Lower leg skin (tissue), 4 donors: ENCODE measurements at regions of chr2 and their contacts with region 1.

Region 1: DNA sequence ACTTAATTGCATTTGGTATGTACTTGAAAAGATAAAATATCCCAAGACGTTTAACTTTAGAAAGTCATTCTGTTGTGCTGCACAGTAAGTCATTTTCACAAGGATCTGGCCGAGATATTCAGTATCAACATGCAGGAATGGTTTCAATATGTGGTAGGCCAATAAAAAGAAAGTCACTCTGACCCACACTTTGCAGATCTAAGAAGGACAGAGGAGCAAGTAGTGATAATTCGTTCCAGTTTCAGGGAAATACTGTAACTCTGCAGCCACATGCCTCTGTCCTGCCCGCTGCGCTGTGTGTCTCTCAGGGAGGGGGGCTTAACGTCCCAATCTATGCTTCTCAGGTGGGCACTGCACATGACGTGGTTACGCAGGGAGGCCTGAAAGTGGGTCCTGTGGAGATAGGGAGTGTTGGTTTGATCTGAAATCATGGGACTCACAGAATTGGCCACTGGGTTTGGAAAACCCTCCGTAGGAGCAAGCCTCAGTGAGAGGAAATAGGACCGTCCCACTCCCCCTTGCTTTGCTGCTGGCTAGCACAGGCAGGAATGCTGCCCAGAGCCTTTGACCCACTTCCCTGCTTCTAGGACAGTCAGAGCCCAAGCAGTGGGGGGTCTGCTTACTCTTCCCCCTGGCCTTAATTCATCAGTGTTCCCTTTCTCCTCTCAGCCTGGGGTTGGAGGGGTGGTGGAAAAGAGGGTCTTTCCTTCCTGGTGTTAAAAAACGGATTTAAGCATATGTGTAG is 314.7 kb upstream of the SPRED2 start:
- DNase-seq: no peak
- H3K4me3 ChIP-seq: no peak overlapping the region
- CTCF ChIP-seq: no peak
- POLR2A ChIP-seq: no peak

Region 2: GRCh38 chr2:65999796-66000195 is 252.7 kb after region 1 on chr2:
- intact Hi-C with region 1: no loop called
- DNase-seq: no peak
- H3K4me3 ChIP-seq: no peak overlapping the region
- CTCF ChIP-seq: no peak
- POLR2A ChIP-seq: no peak

Region 3: GRCh38 chr2:66501267-66501666 is 754.2 kb after region 1 on chr2:
- intact Hi-C with region 1: loop called (anchors 5 kb)
- DNase-seq: no peak
- H3K4me3 ChIP-seq: no peak overlapping the region
- CTCF ChIP-seq: no peak
- POLR2A ChIP-seq: no peak